Ascending aorta (tissue), 2 donors: ENCODE measurements at regions of chr12 and their contacts with region 1.

Region 1: DNA sequence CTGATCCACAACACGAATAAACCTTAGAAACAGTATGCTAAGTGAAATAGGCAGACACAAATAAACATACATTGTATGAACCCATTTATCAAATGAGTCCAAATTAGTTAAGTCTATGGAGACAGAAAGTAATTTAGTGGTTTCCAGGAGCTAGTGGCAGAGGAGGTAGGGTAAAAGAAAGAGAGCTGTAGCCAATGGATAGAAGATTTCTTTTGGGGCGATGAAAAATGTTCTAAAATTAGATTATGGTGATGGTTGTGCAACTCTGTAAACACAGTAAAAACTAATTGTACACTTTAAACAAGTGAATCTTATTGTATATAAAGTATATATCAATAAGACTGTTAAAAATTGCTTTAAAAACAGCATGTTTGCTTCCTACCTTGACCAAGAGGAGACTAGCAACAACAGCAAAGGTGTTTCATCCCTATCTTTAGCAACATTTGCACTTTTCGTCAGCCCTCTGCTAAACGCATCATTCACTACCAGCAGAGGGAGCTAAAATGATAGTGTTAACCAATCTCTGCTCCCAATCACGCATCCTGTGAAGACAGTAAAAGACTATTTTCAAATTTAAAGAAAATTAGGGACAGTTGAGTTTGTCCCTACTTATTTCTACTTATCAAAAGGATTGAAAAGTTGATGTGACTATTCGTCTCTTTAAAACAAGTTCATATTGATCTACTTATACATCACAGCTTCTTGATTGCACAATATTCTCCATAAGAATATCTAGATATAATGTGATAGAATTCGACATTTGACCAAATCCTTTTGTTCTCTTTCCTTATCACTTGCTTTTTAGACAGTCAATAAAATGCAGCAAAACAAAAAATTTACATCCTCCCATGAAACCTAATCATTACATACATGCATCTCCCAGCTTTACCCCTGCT is 24.0 kb upstream of the LGR5 start:
- DNase-seq: no peak
- H3K4me3 ChIP-seq: no peak overlapping the region
- H3K27ac ChIP-seq: no peak overlapping the region
- H3K4me1 ChIP-seq: no peaks in the 10 kb centered on the region
- H3K27me3 ChIP-seq: no peaks in the 10 kb centered on the region
- CTCF ChIP-seq: peak; percentile 46 to 87 (median 62)

Region 2: DNA sequence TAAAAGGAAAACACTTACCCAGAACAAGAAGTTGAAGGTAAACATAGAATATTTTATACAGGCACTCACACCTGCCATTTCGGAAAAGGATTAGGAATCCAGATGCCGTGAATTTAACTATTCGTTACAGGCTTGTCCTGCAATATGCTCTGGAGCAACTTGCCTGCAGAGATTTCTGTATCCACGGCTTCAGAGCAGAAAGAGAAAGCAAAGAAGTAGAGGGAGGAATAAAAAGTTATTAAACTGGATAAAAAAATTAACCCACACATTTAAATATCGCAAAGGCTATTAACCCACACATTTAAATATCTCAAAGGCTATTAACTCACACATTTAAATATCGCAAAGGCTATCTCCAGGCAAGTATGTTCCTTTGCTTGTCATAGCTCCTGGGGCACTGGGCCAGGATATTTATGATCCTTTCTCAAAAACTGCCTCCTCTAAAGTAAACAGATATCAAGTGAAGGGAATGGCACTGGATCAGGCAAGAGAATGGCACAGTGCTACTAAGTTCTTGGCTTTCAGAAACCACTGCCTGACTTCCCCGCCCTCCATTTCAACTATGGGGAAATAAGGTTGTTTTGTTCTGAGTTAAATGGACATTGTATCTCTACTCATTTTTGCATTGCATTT is 257.9 kb before region 1 on chr12 and contains the start of gene TSPAN8:
- intact Hi-C with region 1: no loop called
- DNase-seq: no peak
- H3K4me3 ChIP-seq: peak within 1 kb of the TSS; percentile 17 to 43
- H3K27ac ChIP-seq: no peak within 1 kb of the TSS
- H3K4me1 ChIP-seq: peaks cover 0 to 9% of the 10 kb centered on the region in 2 donors
- H3K27me3 ChIP-seq: no peaks in the 10 kb centered on the region
- CTCF ChIP-seq: no peak
- total RNA-seq, gene TSPAN8: 5.5 TPM

Region 3: DNA sequence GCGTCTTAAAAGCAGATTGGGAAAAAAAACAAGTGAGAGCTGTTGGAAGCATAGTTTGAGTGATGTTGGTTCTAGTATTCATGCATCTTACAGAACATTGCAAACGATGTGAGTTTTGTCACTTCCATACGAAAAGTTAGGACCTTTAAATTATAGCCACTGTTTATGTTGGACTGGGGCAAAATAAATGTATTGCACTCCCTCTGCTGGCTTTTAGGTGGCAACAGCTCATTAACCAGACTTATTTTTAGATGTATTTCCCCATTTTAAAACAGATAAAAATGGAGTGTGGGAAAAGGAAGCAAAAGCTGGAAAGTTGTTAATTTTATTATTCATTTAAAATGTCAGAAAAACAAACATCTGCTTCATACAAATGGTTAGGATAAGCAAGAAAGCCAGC is 135.9 kb after region 1 on chr12:
- intact Hi-C with region 1: loop called (anchors 1 kb)
- DNase-seq: no peak
- H3K4me3 ChIP-seq: no peak overlapping the region
- H3K27ac ChIP-seq: no peak overlapping the region
- H3K4me1 ChIP-seq: no peaks in the 10 kb centered on the region
- H3K27me3 ChIP-seq: no peaks in the 10 kb centered on the region
- CTCF ChIP-seq: peak in 2 of 3 experiments; percentile 20 to 35

Region 4: DNA sequence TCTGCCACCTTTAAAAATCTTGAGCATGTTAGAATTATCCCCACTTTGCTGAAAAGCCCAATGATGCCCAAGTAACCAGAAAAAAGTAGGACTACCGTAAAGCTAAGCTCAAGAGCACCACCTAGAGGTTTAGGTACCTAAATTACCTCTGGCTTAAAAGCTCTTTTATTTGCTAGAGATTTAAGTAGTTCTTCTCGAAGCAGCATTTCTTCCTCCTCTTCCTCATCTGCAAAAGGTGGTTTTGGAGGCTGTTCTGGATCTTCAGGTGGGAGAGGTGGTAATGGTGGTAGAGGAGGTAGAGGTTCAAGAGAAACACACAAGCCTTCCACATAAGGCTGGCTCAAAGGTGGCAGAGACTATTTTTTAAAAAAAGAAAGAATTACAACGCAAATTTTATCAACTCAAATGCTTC is 221.1 kb after region 1 on chr12:
- intact Hi-C with region 1: loop called (anchors 2 kb)
- DNase-seq: no peak
- H3K4me3 ChIP-seq: no peak overlapping the region
- H3K27ac ChIP-seq: no peak overlapping the region
- H3K4me1 ChIP-seq: no peaks in the 10 kb centered on the region
- H3K27me3 ChIP-seq: no peaks in the 10 kb centered on the region
- CTCF ChIP-seq: peak; percentile 42 to 70 (median 70)

Region 5: DNA sequence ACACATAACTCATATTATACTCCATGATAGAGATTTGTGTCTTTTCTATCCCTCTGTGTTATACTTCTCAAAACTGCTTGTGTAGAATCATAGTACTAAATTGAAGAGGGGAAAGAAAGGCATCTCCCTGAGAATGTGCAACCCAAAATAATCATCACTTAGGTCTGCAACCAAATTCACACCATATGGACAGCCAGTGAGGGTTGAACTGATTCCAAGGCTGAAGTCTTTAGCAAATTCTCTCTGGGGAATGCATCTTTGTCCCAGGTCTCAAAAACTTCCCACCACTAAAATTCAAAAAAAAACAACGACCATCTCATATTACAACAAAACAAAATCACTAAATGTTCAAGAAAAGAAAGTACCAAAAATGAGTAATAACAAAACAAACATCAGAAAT is 237.1 kb after region 1 on chr12:
- intact Hi-C with region 1: no loop called
- DNase-seq: no peak
- H3K4me3 ChIP-seq: no peak overlapping the region
- H3K27ac ChIP-seq: no peak overlapping the region
- H3K4me1 ChIP-seq: peaks cover 0 to 4% of the 10 kb centered on the region in 2 donors
- H3K27me3 ChIP-seq: no peaks in the 10 kb centered on the region
- CTCF ChIP-seq: no peak